Activated naive CD4-positive, alpha-beta T cell treated with anti-CD3 and anti-CD28 coated beads for 36 hours (primary cell): ENCODE measurements at regions of chr7 and their contacts with region 1.

Region 1: GRCh38 chr7:2757904-2758672 is 70.1 kb downstream of the AMZ1 start:
- DNase-seq: peak; percentile 91
- H3K4me3 Mint-ChIP-seq: peak overlapping the region; percentile 48
- H3K27ac Mint-ChIP-seq: peak overlapping the region; percentile 94
- H3K4me1 Mint-ChIP-seq: peaks cover 35% of the 10 kb centered on the region
- H3K27me3 Mint-ChIP-seq: no peaks in the 10 kb centered on the region

Region 2: GRCh38 chr7:2529161-2530070 is 228.7 kb before region 1 on chr7:
- CTCF ChIA-PET with region 1: no interaction called
- intact Hi-C with region 1: loop called (anchors 1 kb)
- DNase-seq: peak; percentile 87
- H3K4me3 Mint-ChIP-seq: peak overlapping the region; percentile 68
- H3K27ac Mint-ChIP-seq: peak overlapping the region; percentile 95
- H3K4me1 Mint-ChIP-seq: peaks cover 49% of the 10 kb centered on the region
- H3K27me3 Mint-ChIP-seq: no peaks in the 10 kb centered on the region

Region 3: GRCh38 chr7:2720582-2721491 is 37.3 kb before region 1 on chr7:
- CTCF ChIA-PET with region 1: interaction called, 6 read pairs
- intact Hi-C with region 1: loop called (anchors 1 kb)
- DNase-seq: peak; percentile 95
- H3K4me3 Mint-ChIP-seq: no peak overlapping the region
- H3K27ac Mint-ChIP-seq: peak overlapping the region; percentile 13
- H3K4me1 Mint-ChIP-seq: peaks cover 47% of the 10 kb centered on the region
- H3K27me3 Mint-ChIP-seq: peaks cover 1% of the 10 kb centered on the region

Region 4: GRCh38 chr7:2773601-2774000 is 15.5 kb after region 1 on chr7:
- CTCF ChIA-PET with region 1: interaction called, 6 read pairs
- intact Hi-C with region 1: loop called (anchors 1 kb)
- DNase-seq: no peak
- H3K4me3 Mint-ChIP-seq: no peak overlapping the region
- H3K27ac Mint-ChIP-seq: no peak overlapping the region
- H3K4me1 Mint-ChIP-seq: peaks cover 34% of the 10 kb centered on the region
- H3K27me3 Mint-ChIP-seq: no peaks in the 10 kb centered on the region

Region 5: DNA sequence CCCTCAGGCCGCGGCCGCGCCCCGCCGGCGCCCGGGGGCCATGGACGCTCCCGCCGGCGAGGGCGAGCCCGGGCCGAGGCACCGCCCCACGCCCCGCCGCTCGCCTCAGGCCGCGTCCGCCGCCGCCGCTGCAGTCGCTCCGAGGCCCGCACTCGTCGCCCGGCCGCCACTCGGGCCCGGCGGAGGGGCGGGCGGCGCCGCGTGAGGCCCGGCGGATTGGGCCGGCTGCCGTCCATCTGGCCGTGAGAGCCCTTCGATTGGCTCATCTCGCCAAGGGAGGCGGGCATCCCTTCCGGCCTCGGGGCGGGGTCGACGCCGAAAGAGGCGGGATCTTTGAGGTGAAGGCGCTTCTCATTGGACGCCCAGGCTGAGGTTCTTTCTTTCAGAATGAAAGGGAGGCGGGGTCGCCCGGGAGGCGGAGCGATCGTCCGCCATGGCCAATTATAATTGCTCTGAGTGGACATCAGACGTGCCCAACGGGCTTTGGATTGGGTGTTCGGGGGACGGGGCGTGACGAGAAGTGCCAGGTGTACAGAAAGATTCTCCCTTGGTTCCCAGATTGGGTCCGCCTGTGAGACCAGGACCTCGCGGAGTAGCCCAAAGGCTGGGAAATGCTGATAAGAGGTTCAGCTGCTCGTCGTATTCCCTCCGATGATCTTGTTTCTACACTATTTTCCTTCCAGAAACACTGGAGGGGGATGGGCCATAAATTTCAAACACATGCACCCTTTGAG is 86.2 kb after region 1 on chr7 and contains the start of gene GNA12:
- CTCF ChIA-PET with region 1: no interaction called
- intact Hi-C with region 1: loop called (anchors 2 kb)
- DNase-seq: peak; percentile 99
- H3K4me3 Mint-ChIP-seq: peak within 1 kb of the TSS; percentile 79
- H3K27ac Mint-ChIP-seq: peak within 1 kb of the TSS; percentile 70
- H3K4me1 Mint-ChIP-seq: peaks cover 33% of the 10 kb centered on the region
- H3K27me3 Mint-ChIP-seq: no peaks in the 10 kb centered on the region
- total RNA-seq, gene GNA12: 14.1 to 15.0 TPM